ENCODE measurements at regions of chr11 and their contacts with region 1.

Region 1: DNA sequence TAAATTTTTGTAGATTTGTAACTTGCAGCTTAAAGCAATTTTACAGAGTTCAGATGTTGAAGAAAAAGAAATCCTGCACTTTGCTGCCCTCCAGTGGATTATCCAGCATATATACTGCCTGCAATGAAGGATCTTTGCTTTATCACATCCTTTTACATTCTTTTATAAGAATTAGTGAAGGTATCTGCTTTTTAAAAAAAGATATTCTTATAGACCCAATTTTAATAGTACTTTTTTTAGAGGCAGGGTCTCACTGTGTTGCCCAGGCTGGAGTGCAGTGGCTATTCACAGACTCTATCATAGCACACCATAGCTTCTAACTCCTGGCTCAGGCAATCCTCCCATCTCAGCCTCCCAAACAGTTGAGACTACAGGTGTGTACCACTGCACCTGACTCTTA is 60.7 kb downstream of the TTC17 start:
- DNase-seq: peak; percentile 6
- H3K4me3 Mint-ChIP-seq: no peak overlapping the region
- H3K27ac Mint-ChIP-seq: no peak overlapping the region
- H3K4me1 Mint-ChIP-seq: no peaks in the 10 kb centered on the region
- H3K27me3 Mint-ChIP-seq: no peaks in the 10 kb centered on the region

Region 2: DNA sequence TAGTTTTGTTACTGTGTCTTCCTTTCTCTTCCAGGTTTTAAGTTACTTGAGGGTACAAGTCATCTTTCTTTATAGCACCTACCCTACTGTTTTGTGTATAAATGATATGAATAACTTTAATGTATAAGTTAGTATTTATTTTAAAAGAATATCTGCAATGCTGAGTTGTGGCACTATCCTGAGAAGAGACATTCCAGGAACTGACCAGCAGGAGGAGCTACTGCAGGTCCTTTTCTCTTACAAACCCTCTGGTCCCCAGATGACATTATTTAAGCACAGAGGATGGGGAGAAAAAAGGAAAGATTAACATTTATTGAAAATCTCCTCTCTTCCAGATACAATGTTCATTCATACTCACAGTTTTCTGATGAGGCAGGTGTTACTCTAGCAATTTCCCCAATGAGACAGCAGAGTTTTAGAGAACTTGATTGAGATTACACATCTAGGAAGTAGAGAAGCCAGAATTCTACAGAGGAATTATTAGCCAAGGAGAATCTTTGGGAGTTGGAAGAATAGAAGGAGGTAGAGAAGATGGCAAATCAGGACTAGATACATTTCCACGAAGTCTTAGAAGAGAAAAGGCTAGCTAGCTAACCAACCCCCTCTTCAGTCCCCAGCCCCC is 648.9 kb before region 1 on chr11:
- intact Hi-C with region 1: loop called (anchors 5 kb)
- DNase-seq: no peak
- H3K4me3 Mint-ChIP-seq: no peak overlapping the region
- H3K27ac Mint-ChIP-seq: no peak overlapping the region
- H3K4me1 Mint-ChIP-seq: no peaks in the 10 kb centered on the region
- H3K27me3 Mint-ChIP-seq: no peaks in the 10 kb centered on the region

Region 3: GRCh38 chr11:43327987-43328386 is 91.5 kb before region 1 on chr11:
- intact Hi-C with region 1: loop called (anchors 5 kb)
- DNase-seq: no peak
- H3K4me3 Mint-ChIP-seq: no peak overlapping the region
- H3K27ac Mint-ChIP-seq: no peak overlapping the region
- H3K4me1 Mint-ChIP-seq: peaks cover 5% of the 10 kb centered on the region
- H3K27me3 Mint-ChIP-seq: no peaks in the 10 kb centered on the region

Region 4: GRCh38 chr11:43358801-43359421 is 60.5 kb before region 1 on chr11 and contains the start of gene TTC17:
- intact Hi-C with region 1: loop called (anchors 1 kb)
- DNase-seq: peak; percentile 92
- H3K4me3 Mint-ChIP-seq: peak within 1 kb of the TSS; percentile 94
- H3K27ac Mint-ChIP-seq: peak within 1 kb of the TSS; percentile 92
- H3K4me1 Mint-ChIP-seq: peaks cover 38% of the 10 kb centered on the region
- H3K27me3 Mint-ChIP-seq: peaks cover 2% of the 10 kb centered on the region
- total RNA-seq, gene TTC17: 74.4 and 74.7 TPM in 2 replicates

Region 5: GRCh38 chr11:43399983-43400630 is 19.4 kb before region 1 on chr11:
- intact Hi-C with region 1: loop called (anchors 2 kb)
- DNase-seq: no peak
- H3K4me3 Mint-ChIP-seq: no peak overlapping the region
- H3K27ac Mint-ChIP-seq: peak overlapping the region; percentile 31
- H3K4me1 Mint-ChIP-seq: peaks cover 54% of the 10 kb centered on the region
- H3K27me3 Mint-ChIP-seq: no peaks in the 10 kb centered on the region

Region 6: DNA sequence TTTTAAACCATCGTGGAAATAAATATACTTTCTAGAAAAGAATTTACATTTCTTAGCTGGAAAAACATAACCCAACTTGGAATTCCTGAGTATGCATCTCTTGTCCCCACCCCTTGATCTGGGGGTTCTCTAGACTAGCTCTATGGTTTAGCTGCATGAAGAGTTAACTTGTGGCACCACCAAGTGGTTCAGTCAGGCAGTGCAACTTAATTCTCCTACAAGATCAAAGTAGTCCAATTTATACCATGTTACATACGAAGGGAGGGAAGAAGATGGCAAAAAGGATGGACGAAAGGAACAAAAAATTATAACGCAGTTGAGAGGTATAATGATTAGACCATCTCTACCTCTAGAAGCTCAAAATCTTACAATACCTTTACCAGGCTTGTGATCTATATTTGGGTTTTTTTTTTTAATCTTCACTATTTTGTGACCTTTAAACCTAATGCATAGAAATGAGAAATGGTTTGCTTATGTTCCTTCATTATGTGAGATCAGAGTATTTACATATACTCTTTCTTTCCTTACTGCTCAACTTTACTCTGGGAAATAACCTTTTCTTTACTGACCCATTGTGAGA is 432.7 kb after region 1 on chr11:
- intact Hi-C with region 1: loop called (anchors 1 kb)
- DNase-seq: peak; percentile 33
- H3K4me3 Mint-ChIP-seq: no peak overlapping the region
- H3K27ac Mint-ChIP-seq: no peak overlapping the region
- H3K4me1 Mint-ChIP-seq: no peaks in the 10 kb centered on the region
- H3K27me3 Mint-ChIP-seq: no peaks in the 10 kb centered on the region

Measured in activated T-helper 1 cell treated with anti-CD3 and anti-CD28 coated beads, Interleukin-12 subunit alpha, Interleukin-12 subunit beta, Interleukin-2, Interleukin-4 antibody, amounts not matched to agents 30 ng/mL and 10 ng/mL and 1 ng/mL, durations not matched to agents 14 hours and 24 hours and 36 hours (primary cell).